Panc1 (cell line): ENCODE measurements at regions of chr15 and their contacts with region 1.

Region 1: GRCh38 chr15:89472785-89473256 is 23.6 kb downstream of the RHCG start:
- DNase-seq: peak; percentile 36
- ATAC-seq: peak; percentile 93
- H3K4me3 ChIP-seq: no peak overlapping the region
- H3K27ac ChIP-seq: no peak overlapping the region
- H3K4me1 ChIP-seq: no peaks in the 10 kb centered on the region
- H3K27me3 ChIP-seq: no peaks in the 10 kb centered on the region
- CTCF ChIP-seq: peak; percentile 92

Region 2: GRCh38 chr15:88989578-88989977 is 483.2 kb before region 1 on chr15:
- CTCF ChIA-PET with region 1: no interaction called
- POLR2A ChIA-PET with region 1: no interaction called
- in situ Hi-C with region 1: no loop called
- intact Hi-C with region 1: no loop called
- DNase-seq: no peak
- ATAC-seq: peak; percentile 67
- H3K4me3 ChIP-seq: no peak overlapping the region
- H3K27ac ChIP-seq: peak overlapping the region; percentile 98
- H3K4me1 ChIP-seq: peaks cover 52% of the 10 kb centered on the region
- H3K27me3 ChIP-seq: no peaks in the 10 kb centered on the region
- CTCF ChIP-seq: no peak

Region 3: GRCh38 chr15:89416141-89416853 is 56.5 kb before region 1 on chr15:
- CTCF ChIA-PET with region 1: interaction called, 5 read pairs
- POLR2A ChIA-PET with region 1: no interaction called
- in situ Hi-C with region 1: no loop called
- intact Hi-C with region 1: loop called (anchors 2 kb)
- DNase-seq: no peak
- ATAC-seq: peak; percentile 94
- H3K4me3 ChIP-seq: no peak overlapping the region
- H3K27ac ChIP-seq: no peak overlapping the region
- H3K4me1 ChIP-seq: no peaks in the 10 kb centered on the region
- H3K27me3 ChIP-seq: peaks cover 4% of the 10 kb centered on the region; the same call in 1 of the 2 replicates
- CTCF ChIP-seq: peak; percentile 100